ENCODE measurements at regions of chrX and their contacts with region 1.

Region 1: GRCh38 chrX:25144043-25144940 is 128.5 kb upstream of the ARX start:
- DNase-seq: peak; percentile 3 to 13
- ATAC-seq: peak in 1 of 2 donors; percentile 60
- H3K4me3 ChIP-seq: peak overlapping the region; percentile 15 to 36 (median 28)
- H3K27ac ChIP-seq: no peak overlapping the region
- H3K4me1 ChIP-seq: no peaks in the 10 kb centered on the region
- H3K27me3 ChIP-seq: no peaks in the 10 kb centered on the region
- CTCF ChIP-seq: peak; percentile 50 to 77 (median 65)
- POLR2A ChIP-seq: no peak

Region 2: DNA sequence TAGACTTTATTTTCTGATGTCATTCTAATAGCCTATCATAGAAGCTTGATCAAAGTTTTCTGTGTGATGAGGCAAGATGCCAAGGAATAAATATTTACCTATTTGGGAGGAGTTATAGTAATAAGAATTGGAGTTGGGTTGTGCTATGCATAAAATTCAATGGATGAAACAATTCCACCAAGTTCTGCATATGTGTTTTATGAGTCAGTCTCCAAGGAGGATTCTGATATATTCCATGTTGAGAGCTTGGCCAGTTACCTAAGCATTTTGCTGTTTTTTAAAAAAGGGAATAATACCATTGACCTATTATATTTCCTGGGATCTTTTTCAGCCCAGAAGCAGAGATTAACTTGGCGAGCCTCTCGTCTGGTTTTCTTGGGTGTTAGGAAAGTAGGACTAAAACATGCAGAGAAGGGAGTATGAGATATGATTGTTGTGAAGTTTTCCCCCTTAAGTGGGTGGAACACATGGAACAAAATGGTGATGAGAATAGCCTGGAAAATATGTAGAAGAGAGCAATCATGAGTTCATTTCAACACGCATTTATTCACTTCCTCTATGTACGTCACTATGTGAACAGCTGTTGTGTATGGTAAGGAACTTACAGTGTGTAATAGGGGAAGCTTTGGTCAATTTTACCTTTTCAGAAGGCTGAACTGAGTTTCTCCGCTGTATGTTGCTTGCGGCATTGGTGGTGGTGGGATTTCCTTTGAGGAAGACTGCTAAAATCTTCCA is 411.4 kb before region 1 on chrX:
- in situ Hi-C with region 1: loop called in 1 of 4 experiments (anchors 25 kb)
- intact Hi-C with region 1: no loop called
- DNase-seq: no peak
- ATAC-seq: no peak
- H3K4me3 ChIP-seq: no peak overlapping the region
- H3K27ac ChIP-seq: no peak overlapping the region
- H3K4me1 ChIP-seq: no peaks in the 10 kb centered on the region
- H3K27me3 ChIP-seq: no peaks in the 10 kb centered on the region
- CTCF ChIP-seq: no peak
- POLR2A ChIP-seq: no peak

Region 3: DNA sequence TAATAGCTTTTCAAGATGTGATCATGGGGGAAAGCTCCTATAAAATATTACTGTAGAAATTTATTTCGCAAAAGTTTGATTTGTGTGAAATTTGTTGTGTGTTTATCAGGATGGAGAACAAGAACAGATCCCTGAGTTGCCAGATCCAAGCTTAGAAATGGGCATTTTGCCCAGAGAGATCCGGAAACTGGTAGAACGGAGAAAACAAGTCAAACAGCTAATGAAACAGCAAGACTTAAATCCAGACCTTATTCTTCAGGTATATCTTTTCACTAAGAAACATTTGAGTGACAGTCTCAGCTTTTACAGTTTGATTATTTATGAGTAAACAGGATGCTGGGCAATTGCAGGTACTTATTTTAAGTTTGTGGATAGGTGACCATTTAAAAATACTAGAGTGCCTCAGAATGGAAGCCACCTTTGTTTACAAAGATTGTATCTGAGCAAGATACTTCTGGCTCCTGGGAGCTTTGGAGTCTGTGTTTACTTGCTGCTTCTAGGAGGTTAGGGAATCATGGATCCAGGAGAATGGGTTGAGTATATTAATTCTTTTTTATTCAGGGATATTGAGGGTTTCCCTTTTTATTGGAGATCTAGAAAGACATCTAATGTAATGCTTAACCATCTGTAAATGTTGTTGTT is 396.0 kb before region 1 on chrX:
- in situ Hi-C with region 1: loop called in 3 of 4 experiments (anchors 5 to 25 kb)
- intact Hi-C with region 1: loop called (anchors 2 kb)
- DNase-seq: no peak
- ATAC-seq: no peak
- H3K4me3 ChIP-seq: no peak overlapping the region
- H3K27ac ChIP-seq: no peak overlapping the region
- H3K4me1 ChIP-seq: peaks cover 0 to 3% of the 10 kb centered on the region in 2 donors
- H3K27me3 ChIP-seq: no peaks in the 10 kb centered on the region
- CTCF ChIP-seq: no peak
- POLR2A ChIP-seq: no peak

Region 4: GRCh38 chrX:24759786-24760185 is 384.5 kb before region 1 on chrX:
- in situ Hi-C with region 1: loop called in 3 of 4 experiments (anchors 5 to 10 kb)
- intact Hi-C with region 1: no loop called
- DNase-seq: no peak
- ATAC-seq: no peak
- H3K4me3 ChIP-seq: no peak overlapping the region
- H3K27ac ChIP-seq: peak overlapping the region; percentile 1 to 68 (median 46)
- H3K4me1 ChIP-seq: peaks cover 7 to 9% of the 10 kb centered on the region in 2 donors
- H3K27me3 ChIP-seq: no peaks in the 10 kb centered on the region
- CTCF ChIP-seq: no peak
- POLR2A ChIP-seq: no peak

Region 5: DNA sequence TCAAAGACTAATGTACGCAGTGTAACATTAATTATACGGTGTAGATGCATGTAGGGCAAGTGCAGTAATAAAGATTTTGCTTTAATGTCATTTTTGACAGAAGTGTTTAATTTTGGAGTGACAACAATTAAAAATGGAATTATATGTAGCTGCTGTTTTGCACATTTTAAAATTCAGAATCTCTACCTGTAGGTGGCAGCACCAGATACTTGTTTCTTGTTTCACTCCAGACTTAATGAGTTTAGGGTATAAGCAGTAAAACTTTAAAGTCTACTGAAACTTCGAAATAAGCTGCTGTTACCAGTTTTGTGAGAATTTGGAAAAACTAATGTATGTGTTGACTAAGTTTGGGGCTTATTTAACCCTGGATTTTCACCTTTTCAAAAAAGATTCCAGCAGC is 305.7 kb before region 1 on chrX:
- in situ Hi-C with region 1: loop called in 3 of 4 experiments (anchors 5 to 10 kb)
- intact Hi-C with region 1: loop called (anchors 2 kb)
- DNase-seq: no peak
- ATAC-seq: peak in 1 of 2 donors; percentile 65
- H3K4me3 ChIP-seq: no peak overlapping the region
- H3K27ac ChIP-seq: peak overlapping the region in 3 of 4 donors; percentile 41 to 54 (median 53)
- H3K4me1 ChIP-seq: peaks cover 12 to 13% of the 10 kb centered on the region in 2 donors
- H3K27me3 ChIP-seq: no peaks in the 10 kb centered on the region
- CTCF ChIP-seq: peak; percentile 25 to 59 (median 34)
- POLR2A ChIP-seq: no peak

Region 6: GRCh38 chrX:24858004-24858746 is 286.1 kb before region 1 on chrX:
- in situ Hi-C with region 1: loop called in 1 of 4 experiments (anchors 10 kb)
- intact Hi-C with region 1: no loop called
- DNase-seq: no peak
- ATAC-seq: peak in 1 of 2 donors; percentile 61
- H3K4me3 ChIP-seq: no peak overlapping the region
- H3K27ac ChIP-seq: no peak overlapping the region
- H3K4me1 ChIP-seq: no peaks in the 10 kb centered on the region
- H3K27me3 ChIP-seq: no peaks in the 10 kb centered on the region
- CTCF ChIP-seq: no peak
- POLR2A ChIP-seq: no peak

Measured in gastrocnemius medialis (tissue), 4 donors.